IMR-90 (cell line): ENCODE measurements at regions of chrX and their contacts with region 1.

Region 1: DNA sequence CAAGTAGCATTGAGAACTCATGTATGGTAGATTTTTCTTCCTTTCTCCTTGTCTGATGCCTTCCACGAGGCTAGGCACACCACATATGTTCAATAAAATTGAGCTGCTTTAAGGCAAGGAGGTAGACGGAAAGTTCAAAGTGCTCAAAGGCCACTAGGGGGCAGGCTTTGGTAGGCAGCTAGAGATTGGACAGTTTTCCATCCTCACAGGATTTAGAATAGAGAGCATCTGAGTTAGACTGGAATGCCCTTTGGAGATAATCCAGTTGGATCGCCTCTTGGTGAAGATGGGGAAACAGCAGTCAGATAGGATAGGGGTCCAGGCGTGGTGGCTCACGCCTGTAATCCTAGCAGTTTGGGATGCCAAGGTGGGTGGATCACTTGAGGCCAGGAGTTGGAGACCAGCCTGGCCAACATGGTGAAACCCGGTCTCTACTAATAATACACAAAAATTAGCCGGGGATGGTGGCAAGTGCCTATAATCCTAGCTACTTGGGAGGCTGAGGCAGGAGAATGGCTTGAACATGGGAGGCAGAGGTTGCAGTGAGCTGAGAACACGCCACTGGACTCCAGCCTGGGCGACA is 30.4 kb downstream of the ELF4 start:
- DNase-seq: peak; percentile 75
- ATAC-seq: peak; percentile 79
- H3K4me3 ChIP-seq: no peak overlapping the region
- H3K27ac ChIP-seq: no peak overlapping the region
- H3K4me1 ChIP-seq: peaks cover 4% of the 10 kb centered on the region; the same call in 1 of the 2 replicates
- H3K27me3 ChIP-seq: no peaks in the 10 kb centered on the region
- CTCF ChIP-seq: peak; percentile 77
- POLR2A ChIP-seq: no peak
- RAD21 ChIP-seq: peak; percentile 80

Region 2: DNA sequence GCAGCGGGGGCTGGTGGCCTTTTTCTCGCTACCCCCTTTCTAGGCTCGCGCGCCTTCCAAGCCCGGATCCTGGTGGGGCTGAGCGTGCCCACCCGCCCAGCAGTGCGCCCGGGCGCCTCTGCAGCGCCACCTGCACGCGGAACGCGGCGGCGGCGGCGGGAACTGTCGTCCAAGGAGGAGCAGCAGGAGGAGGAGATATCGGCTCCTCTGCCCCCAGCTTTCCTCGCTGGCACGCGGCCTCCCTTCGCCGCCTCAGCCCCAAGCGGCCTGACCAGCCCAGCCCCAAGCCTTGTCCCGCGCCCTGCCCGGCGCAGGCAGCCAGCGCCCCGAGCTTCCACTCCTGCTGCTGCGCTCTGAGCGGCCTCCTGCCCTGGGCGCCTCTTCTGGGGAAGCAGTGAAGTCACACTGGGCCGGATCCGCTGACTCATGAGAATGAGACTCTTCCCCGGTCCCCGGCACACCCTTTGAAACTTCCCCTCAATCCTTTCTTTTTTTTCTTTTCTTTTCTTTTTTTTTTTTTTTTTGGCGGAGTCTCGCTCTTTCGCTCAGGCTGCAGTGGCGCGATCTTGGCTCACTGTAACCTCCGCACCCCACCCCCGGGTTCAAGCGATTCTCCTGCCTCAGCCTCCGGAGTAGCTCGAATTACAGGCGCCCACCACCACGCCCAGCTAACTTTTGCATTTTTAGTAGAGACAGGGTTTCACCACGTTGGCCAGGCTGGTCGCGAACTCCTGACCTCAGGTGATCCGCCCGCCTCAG is 41.0 kb after region 1 on chrX:
- CTCF ChIA-PET with region 1: interaction called, 7 read pairs
- POLR2A ChIA-PET with region 1: no interaction called
- dilution Hi-C with region 1: no loop called
- in situ Hi-C with region 1: no loop called
- intact Hi-C with region 1: loop called (anchors 1 kb)
- DNase-seq: peak; percentile 71
- ATAC-seq: peak; percentile 76
- H3K4me3 ChIP-seq: peak overlapping the region; percentile 23
- H3K27ac ChIP-seq: peak overlapping the region; percentile 12
- H3K4me1 ChIP-seq: peaks cover 15% of the 10 kb centered on the region
- H3K27me3 ChIP-seq: no peaks in the 10 kb centered on the region
- CTCF ChIP-seq: peak; percentile 59
- POLR2A ChIP-seq: no peak
- RAD21 ChIP-seq: peak; percentile 44

Region 3: GRCh38 chrX:130155564-130155963 is 75.6 kb after region 1 on chrX:
- CTCF ChIA-PET with region 1: no interaction called
- POLR2A ChIA-PET with region 1: no interaction called
- dilution Hi-C with region 1: no loop called
- in situ Hi-C with region 1: no loop called
- intact Hi-C with region 1: no loop called
- DNase-seq: no peak
- ATAC-seq: no peak
- H3K4me3 ChIP-seq: no peak overlapping the region
- H3K27ac ChIP-seq: no peak overlapping the region
- H3K4me1 ChIP-seq: no peaks in the 10 kb centered on the region
- H3K27me3 ChIP-seq: no peaks in the 10 kb centered on the region
- CTCF ChIP-seq: no peak
- POLR2A ChIP-seq: no peak
- RAD21 ChIP-seq: no peak

Region 4: DNA sequence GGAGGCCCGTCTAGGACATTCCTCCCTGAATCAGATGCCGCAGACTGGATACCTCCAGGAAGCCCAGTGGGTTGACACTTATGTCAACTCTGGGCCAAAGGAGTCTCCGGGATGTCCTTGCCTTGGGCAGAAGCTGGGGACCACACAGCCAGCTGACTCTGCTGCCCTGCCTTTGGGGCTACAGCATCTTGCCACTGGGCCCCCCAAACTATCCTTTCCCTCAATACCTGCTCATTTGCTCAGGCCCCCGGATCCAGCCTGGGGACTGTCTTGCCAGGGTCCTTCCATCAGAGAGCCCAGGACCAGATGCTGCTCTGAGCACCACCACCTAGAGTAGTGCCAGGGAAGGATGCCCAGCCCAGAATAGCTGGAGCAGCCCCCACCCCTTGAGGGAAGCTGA is 110.9 kb after region 1 on chrX:
- CTCF ChIA-PET with region 1: no interaction called
- POLR2A ChIA-PET with region 1: no interaction called
- dilution Hi-C with region 1: no loop called
- in situ Hi-C with region 1: loop called (anchors 5 kb)
- intact Hi-C with region 1: loop called (anchors 1 kb)
- DNase-seq: no peak
- ATAC-seq: no peak
- H3K4me3 ChIP-seq: no peak overlapping the region
- H3K27ac ChIP-seq: no peak overlapping the region
- H3K4me1 ChIP-seq: no peaks in the 10 kb centered on the region
- H3K27me3 ChIP-seq: no peaks in the 10 kb centered on the region; the same call in none of the 2 replicates
- CTCF ChIP-seq: no peak
- POLR2A ChIP-seq: no peak
- RAD21 ChIP-seq: no peak